Naive thymus-derived CD4-positive, alpha-beta T cell (primary cell): ENCODE measurements at regions of chr2 and their contacts with region 1.

Region 1: DNA sequence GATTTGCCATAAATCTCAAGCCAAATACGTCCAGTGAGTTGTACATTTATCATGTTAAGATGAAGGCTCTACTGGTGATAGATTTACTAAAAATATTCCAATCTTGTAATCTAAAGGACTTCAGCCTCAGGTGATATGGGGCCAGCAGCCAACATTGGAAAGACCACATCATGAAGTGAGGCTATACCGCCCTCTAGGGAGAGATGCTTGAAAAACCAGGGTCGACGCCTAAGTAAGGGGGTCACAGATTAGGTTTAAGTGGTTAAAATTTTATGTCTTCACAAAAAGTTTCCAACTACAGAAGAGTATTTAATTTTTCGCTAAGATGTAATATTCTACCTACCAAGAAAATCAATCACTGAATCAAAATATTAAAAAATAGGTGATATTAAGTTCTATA is 33.3 kb downstream of the DOCK10 start:
- DNase-seq: no peak
- ATAC-seq: peak; percentile 64
- H3K4me3 ChIP-seq: no peak overlapping the region
- H3K4me3 Mint-ChIP-seq: peak overlapping the region in 5 of 10 donors; percentile 17 to 61 (median 23)
- H3K27ac ChIP-seq: no peak overlapping the region
- H3K27ac Mint-ChIP-seq: peak overlapping the region in 7 of 9 donors; percentile 5 to 88 (median 74)
- H3K4me1 ChIP-seq: peaks cover 14 to 42% of the 10 kb centered on the region in 2 donors
- H3K4me1 Mint-ChIP-seq: peaks cover 55 to 98% (median 96%) of the 10 kb centered on the region in 7 donors
- H3K27me3 ChIP-seq: no peaks in the 10 kb centered on the region
- H3K27me3 Mint-ChIP-seq: no peaks in the 10 kb centered on the region

Region 2: DNA sequence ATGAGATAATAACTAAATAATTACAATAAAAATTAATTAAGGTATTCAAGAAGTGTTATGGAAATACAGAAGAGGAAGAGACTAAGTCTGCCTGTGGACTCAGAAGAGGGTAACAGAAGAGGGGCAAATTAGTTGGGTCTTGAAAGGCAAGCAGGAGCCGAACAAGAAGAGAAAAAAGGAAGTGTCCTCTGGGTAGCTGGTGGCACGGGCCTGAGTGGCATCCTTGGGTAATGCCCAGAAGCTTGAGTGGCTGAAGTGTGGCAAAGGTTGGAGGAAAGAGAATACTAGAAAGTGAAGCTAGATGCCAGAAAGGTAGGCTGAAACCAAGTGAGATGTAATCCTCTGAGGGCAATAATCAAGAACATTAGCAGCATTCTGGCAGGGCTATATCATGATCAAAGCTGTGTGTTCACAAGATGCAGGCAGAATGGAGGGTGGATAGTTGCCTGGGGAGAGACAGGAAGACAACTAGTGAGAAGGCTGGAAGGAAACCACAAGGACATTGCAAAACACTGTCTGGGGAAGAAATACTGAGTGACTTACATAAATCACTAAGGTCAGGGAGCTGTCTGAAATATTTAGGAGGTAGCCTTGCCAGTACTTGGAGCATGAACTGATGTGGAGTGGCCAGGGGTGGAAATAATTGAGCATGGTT is 17.1 kb after region 1 on chr2:
- CTCF ChIA-PET with region 1: interaction called, 3 read pairs
- POLR2A ChIA-PET with region 1: interaction called, 10 read pairs
- intact Hi-C with region 1: loop called (anchors 1 to 2 kb)
- DNase-seq: peak in 6 of 9 donors; percentile 15 to 39 (median 28)
- ATAC-seq: peak; percentile 73
- H3K4me3 ChIP-seq: no peak overlapping the region
- H3K4me3 Mint-ChIP-seq: peak overlapping the region; percentile 0 to 74 (median 63)
- H3K27ac ChIP-seq: peak overlapping the region; percentile 17
- H3K27ac Mint-ChIP-seq: peak overlapping the region; percentile 11 to 78 (median 68)
- H3K4me1 ChIP-seq: peaks cover 34 to 52% of the 10 kb centered on the region in 2 donors
- H3K4me1 Mint-ChIP-seq: peaks cover 63 to 95% (median 83%) of the 10 kb centered on the region in 7 donors
- H3K27me3 ChIP-seq: no peaks in the 10 kb centered on the region
- H3K27me3 Mint-ChIP-seq: no peaks in the 10 kb centered on the region